Activated naive CD4-positive, alpha-beta T cell treated with anti-CD3 and anti-CD28 coated beads for 36 hours (primary cell): ENCODE measurements at regions of chr13 and their contacts with region 1.

Region 1: GRCh38 chr13:76886292-76887075 is at the start of gene KCTD12:
- DNase-seq: peak; percentile 70
- H3K4me3 Mint-ChIP-seq: peak within 1 kb of the TSS; percentile 89
- H3K27ac Mint-ChIP-seq: peak within 1 kb of the TSS; percentile 78
- H3K4me1 Mint-ChIP-seq: peaks cover 28% of the 10 kb centered on the region
- H3K27me3 Mint-ChIP-seq: peaks cover 7% of the 10 kb centered on the region
- total RNA-seq, gene KCTD12: 6.2 to 6.4 TPM

Region 2: DNA sequence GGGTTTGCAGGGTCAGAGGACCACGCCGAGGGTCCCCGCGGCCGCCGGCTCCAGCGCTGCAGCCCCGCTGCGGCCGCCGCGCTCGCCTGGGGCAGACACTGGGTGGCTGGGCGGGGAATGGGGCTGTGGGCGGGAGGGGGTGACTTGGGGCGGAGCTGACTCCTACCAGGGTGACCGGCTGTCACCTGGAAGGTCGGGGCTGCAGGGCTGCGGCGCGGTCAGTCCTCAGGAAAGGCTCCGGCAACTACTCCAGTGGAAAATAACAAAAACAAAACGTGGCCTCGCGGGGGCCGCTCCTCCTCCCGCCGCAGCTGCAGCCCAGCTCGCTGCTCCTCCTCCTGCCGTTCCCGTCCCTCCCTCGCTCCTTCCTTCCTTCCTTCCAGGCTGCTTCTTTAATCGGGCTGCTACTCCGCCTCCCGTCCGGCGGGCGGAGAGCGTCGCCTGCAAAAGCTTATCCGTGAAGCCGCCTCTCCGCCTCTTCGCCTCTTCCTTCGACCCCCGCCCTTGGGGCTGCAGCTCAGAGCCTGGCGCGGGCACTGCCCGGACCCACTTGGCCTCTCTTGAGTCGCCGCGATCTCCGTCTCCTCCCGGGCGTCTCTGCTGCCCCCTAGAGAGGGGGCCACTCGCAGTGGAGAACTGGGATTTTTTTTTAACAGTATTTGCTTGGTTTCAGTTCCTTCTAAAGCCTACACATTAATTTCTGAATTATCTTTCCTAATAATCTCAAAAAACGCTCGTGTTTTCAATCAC is 1404.2 kb before region 1 on chr13 and contains the start of gene TBC1D4:
- CTCF ChIA-PET with region 1: no interaction called
- intact Hi-C with region 1: loop called (anchors 10 kb)
- DNase-seq: peak; percentile 68
- H3K4me3 Mint-ChIP-seq: peak within 1 kb of the TSS; percentile 94
- H3K27ac Mint-ChIP-seq: no peak within 1 kb of the TSS
- H3K4me1 Mint-ChIP-seq: peaks cover 11% of the 10 kb centered on the region
- H3K27me3 Mint-ChIP-seq: peaks cover 53% of the 10 kb centered on the region
- total RNA-seq, gene TBC1D4: 13.4 to 19.7 TPM

Region 3: DNA sequence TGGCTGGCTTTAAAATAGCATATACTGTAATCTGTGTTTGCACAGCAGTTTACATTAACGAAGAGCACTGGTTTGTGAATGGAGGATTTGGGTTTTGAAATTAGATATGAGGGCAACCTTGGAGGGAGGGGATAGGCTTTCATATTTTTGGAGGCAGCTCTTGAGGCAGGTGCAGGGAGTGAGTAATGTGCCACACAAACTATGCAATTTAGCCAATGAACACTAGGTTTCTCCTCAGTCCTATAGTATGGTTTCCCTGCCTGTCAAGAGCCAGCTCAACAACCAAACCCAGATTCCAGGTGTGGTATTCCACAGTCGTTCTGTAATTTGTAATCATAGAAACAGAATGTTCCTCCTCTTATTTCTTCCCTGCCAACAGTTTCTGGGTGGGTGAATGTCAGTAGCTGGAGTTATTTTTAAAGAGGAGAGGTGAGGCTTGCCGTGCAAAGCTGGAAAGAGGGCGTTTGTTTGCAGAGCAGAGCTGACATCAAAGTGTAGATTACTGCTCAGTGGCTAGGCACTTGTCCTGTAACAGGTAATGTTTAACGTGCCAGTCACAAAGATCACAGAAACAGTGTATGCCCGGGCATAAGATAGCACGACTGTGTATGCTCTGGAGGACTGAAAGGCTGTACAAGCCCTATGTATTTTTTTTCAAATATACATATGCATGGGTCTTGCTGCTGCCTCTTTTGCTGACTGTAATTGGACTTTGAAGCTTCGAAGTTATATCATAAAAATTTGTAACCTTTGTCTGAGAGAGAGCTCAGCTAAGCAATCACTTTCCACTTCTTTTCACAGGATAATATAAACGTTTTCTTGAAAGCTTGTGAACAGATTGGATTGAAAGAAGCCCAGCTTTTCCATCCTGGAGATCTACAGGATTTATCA is 1126.1 kb before region 1 on chr13:
- CTCF ChIA-PET with region 1: no interaction called
- intact Hi-C with region 1: loop called (anchors 2 kb)
- DNase-seq: peak; percentile 31
- H3K4me3 Mint-ChIP-seq: peak overlapping the region; percentile 67
- H3K27ac Mint-ChIP-seq: peak overlapping the region; percentile 11
- H3K4me1 Mint-ChIP-seq: peaks cover 72% of the 10 kb centered on the region
- H3K27me3 Mint-ChIP-seq: peaks cover 4% of the 10 kb centered on the region

Region 4: DNA sequence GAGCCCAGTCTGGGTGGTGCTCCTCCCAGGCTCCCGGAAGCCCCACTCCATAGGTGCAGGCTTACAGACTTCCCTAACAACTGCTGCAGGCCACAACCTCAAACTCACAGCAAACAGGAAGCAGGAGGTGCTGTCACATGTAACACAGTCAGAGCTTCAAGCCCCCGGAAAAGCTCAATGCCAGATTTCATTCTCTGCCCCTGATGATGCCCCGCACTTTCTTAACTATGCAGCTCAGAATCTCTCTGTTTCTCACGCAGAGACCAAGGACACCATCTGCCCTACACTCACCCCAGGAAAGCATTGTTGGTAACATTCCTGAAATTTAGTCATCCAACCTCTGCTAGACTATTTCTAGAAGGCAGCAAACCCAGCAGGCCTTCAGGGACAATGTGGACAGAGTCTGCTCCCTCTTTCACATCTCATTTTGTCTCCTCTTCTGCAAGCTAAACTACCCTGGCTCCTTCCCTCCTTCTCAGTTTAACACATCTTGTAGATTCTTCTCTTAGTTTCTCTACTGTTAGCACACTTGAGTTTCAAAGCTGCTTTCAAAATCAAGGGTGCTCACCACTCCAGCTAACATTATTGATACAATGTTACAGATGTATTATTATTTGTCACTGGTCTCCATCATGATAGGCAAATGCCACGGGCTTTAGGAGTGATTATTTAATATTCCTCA is 162.8 kb before region 1 on chr13:
- CTCF ChIA-PET with region 1: interaction called, 5 read pairs
- intact Hi-C with region 1: loop called (anchors 5 kb)
- DNase-seq: peak; percentile 25
- H3K4me3 Mint-ChIP-seq: no peak overlapping the region
- H3K27ac Mint-ChIP-seq: no peak overlapping the region
- H3K4me1 Mint-ChIP-seq: no peaks in the 10 kb centered on the region
- H3K27me3 Mint-ChIP-seq: no peaks in the 10 kb centered on the region

Region 5: GRCh38 chr13:76903544-76904162 is 17.2 kb after region 1 on chr13:
- CTCF ChIA-PET with region 1: interaction called, 23 read pairs
- intact Hi-C with region 1: loop called (anchors 1 kb)
- DNase-seq: peak; percentile 81
- H3K4me3 Mint-ChIP-seq: no peak overlapping the region
- H3K27ac Mint-ChIP-seq: no peak overlapping the region
- H3K4me1 Mint-ChIP-seq: no peaks in the 10 kb centered on the region
- H3K27me3 Mint-ChIP-seq: peaks cover 10% of the 10 kb centered on the region

Region 6: GRCh38 chr13:77697217-77698103 is 811.0 kb after region 1 on chr13 and contains the start of gene SLAIN1:
- CTCF ChIA-PET with region 1: no interaction called
- intact Hi-C with region 1: loop called (anchors 5 kb)
- DNase-seq: peak; percentile 79
- H3K4me3 Mint-ChIP-seq: peak within 1 kb of the TSS; percentile 96
- H3K27ac Mint-ChIP-seq: peak within 1 kb of the TSS; percentile 59
- H3K4me1 Mint-ChIP-seq: peaks cover 30% of the 10 kb centered on the region
- H3K27me3 Mint-ChIP-seq: no peaks in the 10 kb centered on the region
- total RNA-seq, gene SLAIN1: 18.0 to 21.7 TPM